ENCODE measurements at regions of chr11 and their contacts with region 1.

Region 1: GRCh38 chr11:44286268-44286880 is 23.6 kb downstream of the ALX4 start:
- DNase-seq: peak; percentile 87
- H3K4me3 Mint-ChIP-seq: no peak overlapping the region
- H3K27ac Mint-ChIP-seq: no peak overlapping the region
- H3K4me1 Mint-ChIP-seq: no peaks in the 10 kb centered on the region
- H3K27me3 Mint-ChIP-seq: peaks cover 4% of the 10 kb centered on the region

Region 2: DNA sequence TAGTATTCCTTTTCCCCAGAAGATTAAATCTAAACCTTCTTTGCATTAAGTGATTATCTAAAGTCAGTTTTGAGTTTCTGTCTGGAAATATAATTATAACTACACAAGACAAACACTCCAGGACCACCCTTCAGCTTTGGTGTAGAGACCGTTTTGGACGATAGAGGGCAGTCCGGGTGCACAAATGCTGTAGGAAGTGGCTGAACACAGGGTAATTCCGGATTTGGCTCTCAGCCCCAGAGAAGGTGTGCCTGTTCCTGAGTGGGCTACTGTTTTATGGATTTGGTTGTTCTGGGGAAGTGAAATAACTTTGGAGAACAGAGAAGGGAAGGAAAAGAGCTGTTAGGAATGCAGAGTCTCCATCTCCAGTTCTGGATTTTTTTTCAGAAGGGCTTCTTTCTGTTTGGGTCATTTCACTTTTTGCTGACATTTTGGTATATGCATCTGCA is 176.1 kb before region 1 on chr11:
- intact Hi-C with region 1: loop called (anchors 1 kb)
- DNase-seq: peak; percentile 87
- H3K4me3 Mint-ChIP-seq: no peak overlapping the region
- H3K27ac Mint-ChIP-seq: peak overlapping the region; percentile 39
- H3K4me1 Mint-ChIP-seq: peaks cover 11% of the 10 kb centered on the region
- H3K27me3 Mint-ChIP-seq: no peaks in the 10 kb centered on the region

Region 3: GRCh38 chr11:44519989-44520737 is 233.8 kb after region 1 on chr11:
- intact Hi-C with region 1: loop called (anchors 5 kb)
- DNase-seq: no peak
- H3K4me3 Mint-ChIP-seq: no peak overlapping the region
- H3K27ac Mint-ChIP-seq: no peak overlapping the region
- H3K4me1 Mint-ChIP-seq: peaks cover 6% of the 10 kb centered on the region
- H3K27me3 Mint-ChIP-seq: peaks cover 34% of the 10 kb centered on the region

Region 4: GRCh38 chr11:44538375-44539054 is 252.1 kb after region 1 on chr11:
- intact Hi-C with region 1: loop called (anchors 1 kb)
- DNase-seq: peak; percentile 93
- H3K4me3 Mint-ChIP-seq: no peak overlapping the region
- H3K27ac Mint-ChIP-seq: no peak overlapping the region
- H3K4me1 Mint-ChIP-seq: peaks cover 4% of the 10 kb centered on the region
- H3K27me3 Mint-ChIP-seq: peaks cover 1% of the 10 kb centered on the region